ENCODE measurements at regions of chr7 and their contacts with region 1.

Region 1: GRCh38 chr7:25565949-25566348 is 337.7 kb upstream of the NPVF start:
- DNase-seq: peak; percentile 27 to 75
- H3K4me3 ChIP-seq: no peak overlapping the region
- H3K27ac ChIP-seq: no peak overlapping the region
- H3K4me1 ChIP-seq: peaks cover 0 to 4% (median 2%) of the 10 kb centered on the region in 4 experiments; a peak in 2 of 7 replicates
- H3K27me3 ChIP-seq: no peaks in the 10 kb centered on the region
- CTCF ChIP-seq: peak; percentile 54 to 100 (median 97)
- EP300 ChIP-seq: no peak
- POLR2A ChIP-seq: no peak
- RAD21 ChIP-seq: peak; percentile 95 to 96

Region 2: GRCh38 chr7:25259587-25260243 is 306.2 kb before region 1 on chr7:
- CTCF ChIA-PET with region 1: interaction called, 56 read pairs
- POLR2A ChIA-PET with region 1: no interaction called
- DNase-seq: peak; percentile 23 to 66
- H3K4me3 ChIP-seq: no peak overlapping the region
- H3K27ac ChIP-seq: no peak overlapping the region
- H3K4me1 ChIP-seq: no peaks in the 10 kb centered on the region
- H3K27me3 ChIP-seq: no peaks in the 10 kb centered on the region; a peak in 1 of 7 replicates
- CTCF ChIP-seq: peak; percentile 55 to 94 (median 93)
- EP300 ChIP-seq: no peak
- POLR2A ChIP-seq: no peak
- RAD21 ChIP-seq: peak; percentile 97 to 99

Region 3: DNA sequence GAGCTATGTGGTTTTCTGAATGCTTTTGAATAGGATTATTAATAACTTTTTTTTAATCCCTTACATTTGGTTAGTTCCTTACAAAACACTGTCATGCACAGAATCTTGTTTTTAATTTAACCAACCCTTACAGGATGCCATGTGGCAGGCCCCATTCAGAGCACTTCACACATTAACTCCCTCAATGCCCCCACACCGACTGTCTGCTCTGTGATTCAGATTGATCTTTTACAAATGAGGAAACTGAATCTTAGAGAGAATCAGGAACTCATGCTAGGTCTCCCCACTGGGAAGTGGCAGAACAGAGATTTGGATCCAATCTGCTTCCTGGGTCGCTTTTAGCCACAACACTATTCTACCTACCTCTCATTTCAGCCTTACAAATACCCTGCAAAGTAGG is 141.8 kb before region 1 on chr7:
- CTCF ChIA-PET with region 1: interaction called, 35 read pairs
- POLR2A ChIA-PET with region 1: no interaction called
- DNase-seq: no peak
- H3K4me3 ChIP-seq: no peak overlapping the region
- H3K27ac ChIP-seq: no peak overlapping the region
- H3K4me1 ChIP-seq: peaks cover 0 to 3% (median under 1%) of the 10 kb centered on the region in 4 experiments; a peak in 1 of 7 replicates
- H3K27me3 ChIP-seq: no peaks in the 10 kb centered on the region
- CTCF ChIP-seq: no peak
- EP300 ChIP-seq: no peak
- POLR2A ChIP-seq: no peak
- RAD21 ChIP-seq: no peak

Region 4: GRCh38 chr7:25578991-25579777 is 13.2 kb after region 1 on chr7:
- CTCF ChIA-PET with region 1: interaction called, 35 read pairs
- POLR2A ChIA-PET with region 1: no interaction called
- DNase-seq: no peak
- H3K4me3 ChIP-seq: peak overlapping the region in 1 of 4 experiments; percentile 4; a peak in 1 of 8 replicates
- H3K27ac ChIP-seq: no peak overlapping the region
- H3K4me1 ChIP-seq: no peaks in the 10 kb centered on the region
- H3K27me3 ChIP-seq: peaks cover 0 to 2% (median under 1%) of the 10 kb centered on the region in 4 experiments; a peak in 3 of 7 replicates
- CTCF ChIP-seq: no peak
- EP300 ChIP-seq: no peak
- POLR2A ChIP-seq: no peak
- RAD21 ChIP-seq: no peak

Region 5: DNA sequence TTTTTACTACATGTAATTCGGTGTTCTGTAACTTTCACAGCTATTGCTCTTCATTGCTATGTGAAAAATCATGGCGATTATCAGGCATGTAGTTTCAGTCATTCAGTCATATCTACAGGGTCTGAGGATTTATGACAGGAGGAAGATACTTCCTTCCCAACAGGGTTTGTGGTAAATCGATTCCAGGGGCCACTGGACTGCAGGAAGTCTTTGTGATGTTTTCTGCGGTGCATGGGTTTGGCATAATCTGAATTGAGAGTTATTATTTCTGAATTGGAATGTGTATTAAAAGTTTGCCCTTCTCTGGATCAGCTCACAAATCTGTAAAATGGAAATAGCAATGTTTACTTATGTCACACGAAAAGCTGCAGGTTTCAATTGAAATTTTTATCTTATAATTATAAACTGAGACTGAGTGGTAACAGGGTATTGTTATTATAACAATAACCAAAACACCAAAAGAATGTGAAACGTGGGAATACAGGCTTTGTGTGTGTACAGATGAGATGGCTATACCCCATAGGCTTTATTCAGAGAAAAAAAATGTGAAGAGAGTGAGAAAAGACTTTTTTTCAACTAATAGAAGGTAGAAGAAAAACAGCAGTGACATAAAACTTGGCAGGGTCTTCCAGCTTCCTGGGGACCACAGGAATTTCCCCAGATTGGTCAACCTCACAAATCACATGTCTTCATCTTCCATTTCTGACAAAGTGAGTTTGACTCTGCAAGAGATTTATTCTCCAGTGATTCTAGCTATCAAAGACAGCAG is 278.3 kb after region 1 on chr7:
- CTCF ChIA-PET with region 1: interaction called, 40 read pairs
- POLR2A ChIA-PET with region 1: no interaction called
- DNase-seq: no peak
- H3K4me3 ChIP-seq: no peak overlapping the region
- H3K27ac ChIP-seq: no peak overlapping the region
- H3K4me1 ChIP-seq: no peaks in the 10 kb centered on the region; a peak in 1 of 7 replicates
- H3K27me3 ChIP-seq: no peaks in the 10 kb centered on the region
- CTCF ChIP-seq: no peak
- EP300 ChIP-seq: no peak
- POLR2A ChIP-seq: no peak
- RAD21 ChIP-seq: no peak